ENCODE measurements at regions of chr7 and their contacts with region 1.

Region 1: GRCh38 chr7:1432411-1433082 is 26.7 kb downstream of the MICALL2 start:
- DNase-seq: peak; percentile 66 to 87 (median 72)
- ATAC-seq: peak in 3 of 4 donors; percentile 61 to 72 (median 65)
- H3K4me3 ChIP-seq: no peak overlapping the region
- H3K27ac ChIP-seq: no peak overlapping the region
- H3K4me1 ChIP-seq: peaks cover 0 to 11% (median 2%) of the 10 kb centered on the region in 12 donors
- H3K27me3 ChIP-seq: peaks cover 11 to 31% (median 22%) of the 10 kb centered on the region in 9 donors
- CTCF ChIP-seq: peak; percentile 89 to 99 (median 96)
- POLR2A ChIP-seq: no peak

Region 2: GRCh38 chr7:1193593-1194424 is 238.7 kb before region 1 on chr7:
- intact Hi-C with region 1: loop called in 1 of 10 experiments (anchors 5 kb)
- DNase-seq: peak; percentile 41 to 80 (median 55)
- ATAC-seq: peak; percentile 71 to 94 (median 92)
- H3K4me3 ChIP-seq: no peak overlapping the region
- H3K27ac ChIP-seq: no peak overlapping the region
- H3K4me1 ChIP-seq: peaks cover 0 to 8% (median 0%) of the 10 kb centered on the region in 12 donors
- H3K27me3 ChIP-seq: peaks cover 0 to 23% (median 6%) of the 10 kb centered on the region in 9 donors
- CTCF ChIP-seq: peak in 11 of 12 donors; percentile 16 to 61 (median 48)
- POLR2A ChIP-seq: no peak

Region 3: DNA sequence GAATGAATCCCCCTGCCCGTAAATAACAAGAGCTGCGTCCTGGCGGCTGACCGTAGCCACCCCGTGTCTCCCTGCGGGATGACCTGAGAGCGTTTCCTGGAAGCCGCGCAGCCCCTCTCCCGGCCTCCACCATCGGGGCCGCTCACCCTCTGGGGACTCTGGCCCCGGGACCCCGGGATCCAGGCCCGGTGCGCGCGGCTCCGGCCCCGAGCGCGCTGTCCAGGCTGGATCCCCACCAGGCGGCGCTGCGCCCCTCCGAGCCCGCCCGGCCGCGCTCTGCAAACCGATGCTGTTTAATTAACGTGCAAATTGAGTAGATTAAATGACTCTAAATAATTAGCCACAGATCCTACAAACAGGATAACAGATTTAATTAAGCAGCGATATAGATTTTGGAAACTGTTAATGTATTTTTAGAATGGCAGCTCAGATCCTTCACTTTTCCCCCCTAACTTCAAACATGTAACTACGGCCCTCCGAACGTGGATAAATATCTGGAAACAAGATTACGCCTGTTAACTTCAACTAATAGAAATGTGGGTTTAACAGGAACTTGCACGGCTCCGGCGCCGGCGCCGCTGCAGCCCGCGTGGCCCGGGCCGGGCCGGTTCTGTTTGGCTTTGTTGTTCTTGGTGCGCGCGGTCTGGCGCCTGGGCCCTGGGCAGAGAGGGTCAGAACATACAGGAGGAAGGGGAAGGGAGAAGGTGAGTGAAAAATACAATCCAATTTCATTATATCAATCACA is 206.9 kb before region 1 on chr7:
- intact Hi-C with region 1: loop called in 7 of 10 experiments (anchors 1 to 10 kb)
- DNase-seq: no peak
- ATAC-seq: peak in 3 of 4 donors; percentile 41 to 58 (median 47)
- H3K4me3 ChIP-seq: no peak overlapping the region
- H3K27ac ChIP-seq: no peak overlapping the region
- H3K4me1 ChIP-seq: peaks cover 0 to 25% (median 4%) of the 10 kb centered on the region in 12 donors
- H3K27me3 ChIP-seq: peaks cover 71 to 100% (median 95%) of the 10 kb centered on the region in 9 donors
- CTCF ChIP-seq: peak; percentile 59 to 86 (median 80)
- POLR2A ChIP-seq: no peak

Region 4: GRCh38 chr7:1466524-1467271 is 34.2 kb after region 1 on chr7:
- intact Hi-C with region 1: loop called in 4 of 10 experiments (anchors 5 kb)
- DNase-seq: peak; percentile 76 to 88 (median 82)
- ATAC-seq: peak; percentile 47 to 84 (median 62)
- H3K4me3 ChIP-seq: peak overlapping the region in 2 of 12 donors; percentile 10 to 21
- H3K27ac ChIP-seq: peak overlapping the region in 11 of 12 donors; percentile 12 to 84 (median 64)
- H3K4me1 ChIP-seq: peaks cover 4 to 33% (median 14%) of the 10 kb centered on the region in 12 donors
- H3K27me3 ChIP-seq: no peaks in the 10 kb centered on the region
- CTCF ChIP-seq: peak in 2 of 12 donors; percentile 6 to 17
- POLR2A ChIP-seq: no peak

Region 5: GRCh38 chr7:1473864-1474512 is 41.4 kb after region 1 on chr7:
- intact Hi-C with region 1: loop called in 5 of 10 experiments (anchors 5 kb)
- DNase-seq: peak; percentile 85 to 91 (median 87)
- ATAC-seq: peak; percentile 52 to 79 (median 72)
- H3K4me3 ChIP-seq: no peak overlapping the region
- H3K27ac ChIP-seq: peak overlapping the region in 1 of 12 donors; percentile 26
- H3K4me1 ChIP-seq: peaks cover 0 to 11% (median 2%) of the 10 kb centered on the region in 12 donors
- H3K27me3 ChIP-seq: no peaks in the 10 kb centered on the region
- CTCF ChIP-seq: peak; percentile 87 to 96 (median 91)
- POLR2A ChIP-seq: no peak

Measured in heart left ventricle (tissue), 16 donors.